ENCODE measurements at regions of chr21 and their contacts with region 1.

Region 1: GRCh38 chr21:31255896-31256295 is 88.2 kb downstream of the TIAM1 start:
- DNase-seq: no peak
- ATAC-seq: no peak
- H3K4me3 Mint-ChIP-seq: no peak overlapping the region
- H3K27ac Mint-ChIP-seq: no peak overlapping the region
- H3K4me1 Mint-ChIP-seq: no peaks in the 10 kb centered on the region
- H3K27me3 Mint-ChIP-seq: no peaks in the 10 kb centered on the region

Region 2: DNA sequence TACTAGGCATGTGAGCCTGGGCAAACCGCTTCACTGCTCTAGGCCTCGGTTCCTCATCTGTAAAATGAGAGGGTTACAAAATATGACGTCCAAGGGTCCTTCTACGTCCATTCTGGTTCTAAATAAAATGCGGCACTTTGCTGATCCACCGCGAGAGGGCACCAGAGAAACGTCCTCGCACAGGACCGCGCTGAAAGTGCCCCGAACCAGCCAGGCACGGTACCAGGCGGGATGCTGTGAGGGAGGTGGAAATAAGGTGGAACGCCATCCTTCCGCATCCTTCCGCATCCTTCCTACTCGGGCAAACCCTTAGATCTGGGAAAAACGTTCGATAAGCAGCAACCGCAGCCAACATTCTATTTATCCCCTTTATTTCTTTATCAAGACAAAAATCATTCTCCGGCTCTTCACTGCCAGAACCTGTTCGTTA is 157.3 kb before region 1 on chr21:
- CTCF ChIA-PET with region 1: no interaction called
- POLR2A ChIA-PET with region 1: no interaction called
- intact Hi-C with region 1: no loop called
- DNase-seq: peak; percentile 86
- ATAC-seq: peak; percentile 89
- H3K4me3 Mint-ChIP-seq: no peak overlapping the region
- H3K27ac Mint-ChIP-seq: peak overlapping the region; percentile 38
- H3K4me1 Mint-ChIP-seq: peaks cover 21% of the 10 kb centered on the region
- H3K27me3 Mint-ChIP-seq: peaks cover 3% of the 10 kb centered on the region

Region 3: GRCh38 chr21:31162827-31163226 is 93.1 kb before region 1 on chr21:
- CTCF ChIA-PET with region 1: no interaction called
- POLR2A ChIA-PET with region 1: no interaction called
- intact Hi-C with region 1: no loop called
- DNase-seq: no peak
- ATAC-seq: no peak
- H3K4me3 Mint-ChIP-seq: peak overlapping the region; percentile 9
- H3K27ac Mint-ChIP-seq: peak overlapping the region; percentile 68
- H3K4me1 Mint-ChIP-seq: peaks cover 90% of the 10 kb centered on the region
- H3K27me3 Mint-ChIP-seq: no peaks in the 10 kb centered on the region

Region 4: GRCh38 chr21:31204801-31205200 is 51.1 kb before region 1 on chr21:
- CTCF ChIA-PET with region 1: no interaction called
- POLR2A ChIA-PET with region 1: no interaction called
- intact Hi-C with region 1: loop called in 1 of 2 experiments (anchors 5 kb)
- DNase-seq: no peak
- ATAC-seq: no peak
- H3K4me3 Mint-ChIP-seq: no peak overlapping the region
- H3K27ac Mint-ChIP-seq: no peak overlapping the region
- H3K4me1 Mint-ChIP-seq: peaks cover 17% of the 10 kb centered on the region
- H3K27me3 Mint-ChIP-seq: no peaks in the 10 kb centered on the region

Region 5: DNA sequence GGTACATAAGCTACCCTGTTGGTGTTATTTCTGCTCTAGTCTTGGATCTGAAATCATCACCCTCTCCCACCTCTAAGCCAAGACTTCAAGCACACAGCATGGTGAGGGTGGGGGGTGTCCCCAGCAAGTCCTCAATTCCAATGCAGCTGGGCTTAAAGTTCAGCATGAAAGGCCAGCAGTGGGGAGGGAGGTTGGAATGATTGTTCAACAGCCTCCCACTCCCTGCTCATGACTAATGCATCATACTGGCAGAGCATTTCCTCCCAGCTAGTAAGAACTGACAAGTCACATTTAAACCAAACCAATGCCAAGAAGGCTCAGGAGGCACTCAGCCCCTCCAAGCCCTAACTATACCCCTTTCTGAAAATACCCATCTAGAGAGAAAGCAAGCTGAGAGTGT is 38.1 kb after region 1 on chr21:
- CTCF ChIA-PET with region 1: no interaction called
- POLR2A ChIA-PET with region 1: no interaction called
- intact Hi-C with region 1: no loop called
- DNase-seq: peak; percentile 85
- ATAC-seq: peak; percentile 94
- H3K4me3 Mint-ChIP-seq: no peak overlapping the region
- H3K27ac Mint-ChIP-seq: peak overlapping the region; percentile 79
- H3K4me1 Mint-ChIP-seq: peaks cover 47% of the 10 kb centered on the region
- H3K27me3 Mint-ChIP-seq: no peaks in the 10 kb centered on the region